Posterior vena cava (tissue), 2 donors: ENCODE measurements at regions of chr1 and their contacts with region 1.

Region 1: GRCh38 chr1:202516434-202516877 is 168.0 kb downstream of the PPP1R12B start:
- DNase-seq: no peak

Region 2: GRCh38 chr1:202498542-202498941 is 17.9 kb before region 1 on chr1:
- intact Hi-C with region 1: no loop called
- DNase-seq: no peak

Region 3: DNA sequence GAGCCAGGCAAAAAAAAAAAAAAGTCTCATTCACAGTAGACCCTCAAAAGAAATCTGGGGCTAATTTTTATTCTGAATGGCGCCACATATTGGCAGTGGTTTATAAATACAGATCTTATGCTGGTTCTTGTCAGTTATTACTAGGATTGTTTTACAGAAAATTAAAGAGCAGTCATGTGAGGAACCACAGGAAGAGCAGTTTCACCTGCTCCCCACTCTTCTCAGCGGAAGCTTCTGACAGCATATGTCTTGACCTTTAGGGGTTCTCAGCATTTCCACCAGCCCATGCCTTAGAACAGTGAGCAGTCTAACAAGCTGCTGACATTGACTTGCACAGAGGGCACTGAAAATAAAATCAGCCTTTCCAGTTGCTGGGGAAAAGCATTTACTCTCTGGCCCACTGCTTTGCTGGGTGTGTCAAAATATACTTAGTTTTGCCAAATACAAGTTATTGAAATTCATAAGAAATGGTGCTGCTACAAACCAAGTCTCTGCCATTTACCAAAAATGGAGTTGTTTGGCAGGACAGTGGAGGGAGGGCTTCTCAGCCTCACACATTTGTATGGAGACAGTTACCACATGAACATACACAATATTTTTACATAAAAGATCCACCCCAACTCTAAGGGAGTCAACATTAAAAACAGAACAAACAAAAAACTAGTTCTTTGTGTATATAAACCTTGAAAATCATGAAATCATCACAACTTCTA is 49.6 kb after region 1 on chr1:
- intact Hi-C with region 1: loop called in 1 of 2 experiments (anchors 10 kb)
- DNase-seq: no peak